A673 (cell line): ENCODE measurements at regions of chr9 and their contacts with region 1.

Region 1: DNA sequence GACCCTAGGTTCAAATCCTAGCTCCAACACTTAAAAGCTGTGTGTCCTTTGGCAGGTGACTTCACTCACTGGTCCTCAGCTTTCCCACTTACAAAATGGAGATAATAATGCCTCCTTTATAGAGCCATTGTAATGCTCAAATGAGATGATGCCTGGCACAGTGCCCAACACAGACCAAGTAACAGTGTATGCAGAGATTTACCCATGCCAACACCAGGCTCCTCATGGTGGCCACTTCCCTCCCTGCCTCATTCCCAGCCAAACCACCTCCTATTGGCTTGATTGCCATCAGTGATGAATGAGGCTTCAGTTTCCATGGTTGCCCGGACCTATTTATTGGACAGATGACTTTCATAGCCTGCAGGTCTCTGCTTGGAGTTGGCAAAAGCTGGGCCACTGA is 469.4 kb downstream of the CDK5RAP2 start:
- DNase-seq: no peak
- H3K4me3 ChIP-seq: no peak overlapping the region
- H3K27ac ChIP-seq: no peak overlapping the region
- H3K4me1 ChIP-seq: no peaks in the 10 kb centered on the region
- H3K27me3 ChIP-seq: peaks cover 28% of the 10 kb centered on the region
- CTCF ChIP-seq: no peak

Region 2: GRCh38 chr9:119004620-119004994 is 1105.9 kb before region 1 on chr9:
- CTCF ChIA-PET with region 1: no interaction called
- POLR2A ChIA-PET with region 1: no interaction called
- intact Hi-C with region 1: no loop called
- DNase-seq: no peak
- H3K4me3 ChIP-seq: no peak overlapping the region
- H3K27ac ChIP-seq: no peak overlapping the region
- H3K4me1 ChIP-seq: no peaks in the 10 kb centered on the region
- H3K27me3 ChIP-seq: no peaks in the 10 kb centered on the region
- CTCF ChIP-seq: no peak

Region 3: GRCh38 chr9:119611564-119611963 is 499.0 kb before region 1 on chr9:
- CTCF ChIA-PET with region 1: no interaction called
- POLR2A ChIA-PET with region 1: no interaction called
- intact Hi-C with region 1: no loop called
- DNase-seq: no peak
- H3K4me3 ChIP-seq: no peak overlapping the region
- H3K27ac ChIP-seq: no peak overlapping the region
- H3K4me1 ChIP-seq: no peaks in the 10 kb centered on the region
- H3K27me3 ChIP-seq: peaks cover 8% of the 10 kb centered on the region
- CTCF ChIP-seq: no peak

Region 4: DNA sequence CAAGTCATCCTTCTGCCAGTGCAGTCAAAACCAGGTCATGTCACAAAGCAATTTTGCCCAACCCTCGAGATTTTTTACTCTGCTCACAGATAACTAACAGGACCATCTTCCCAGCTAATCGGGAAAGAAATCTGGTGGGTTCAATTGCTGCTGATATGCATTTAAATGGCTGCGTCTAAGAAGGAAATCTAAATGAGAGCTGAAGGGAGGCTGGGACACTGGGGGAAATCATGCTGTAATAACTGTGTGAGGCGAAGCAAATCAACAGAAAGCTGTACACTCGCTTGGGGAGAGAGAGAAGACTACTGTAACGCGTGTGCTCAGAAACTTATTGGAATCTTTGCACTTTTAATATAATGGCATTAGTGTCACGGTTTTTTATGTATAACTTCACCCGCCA is 65.5 kb before region 1 on chr9:
- CTCF ChIA-PET with region 1: no interaction called
- POLR2A ChIA-PET with region 1: no interaction called
- intact Hi-C with region 1: loop called (anchors 10 kb)
- DNase-seq: no peak
- H3K4me3 ChIP-seq: no peak overlapping the region
- H3K27ac ChIP-seq: no peak overlapping the region
- H3K4me1 ChIP-seq: no peaks in the 10 kb centered on the region
- H3K27me3 ChIP-seq: peaks cover 23% of the 10 kb centered on the region
- CTCF ChIP-seq: no peak

Region 5: DNA sequence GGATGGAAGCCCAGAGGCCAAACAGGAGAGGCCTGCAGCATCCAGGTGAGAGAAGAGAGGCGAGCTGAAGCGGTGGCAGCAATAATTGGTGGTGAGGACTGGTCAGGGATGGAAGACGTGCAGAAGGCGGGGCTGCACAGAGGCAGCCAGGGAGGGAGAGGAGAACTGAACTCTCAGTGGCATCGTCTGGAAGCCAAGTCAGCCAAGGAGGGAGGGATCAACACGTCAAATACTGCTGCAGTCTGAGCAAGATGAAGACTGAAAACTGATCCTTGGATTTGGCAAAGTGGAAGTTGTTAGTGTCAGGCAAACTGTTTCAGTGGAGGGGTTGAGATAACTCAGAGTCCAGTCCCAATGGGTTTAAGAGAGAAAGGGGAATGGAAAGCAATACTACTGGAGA is 324.0 kb after region 1 on chr9:
- CTCF ChIA-PET with region 1: no interaction called
- POLR2A ChIA-PET with region 1: no interaction called
- intact Hi-C with region 1: no loop called
- DNase-seq: no peak
- H3K4me3 ChIP-seq: no peak overlapping the region
- H3K27ac ChIP-seq: no peak overlapping the region
- H3K4me1 ChIP-seq: no peaks in the 10 kb centered on the region
- H3K27me3 ChIP-seq: no peaks in the 10 kb centered on the region
- CTCF ChIP-seq: no peak